ENCODE measurements at regions of chr5 and their contacts with region 1.

Region 1: DNA sequence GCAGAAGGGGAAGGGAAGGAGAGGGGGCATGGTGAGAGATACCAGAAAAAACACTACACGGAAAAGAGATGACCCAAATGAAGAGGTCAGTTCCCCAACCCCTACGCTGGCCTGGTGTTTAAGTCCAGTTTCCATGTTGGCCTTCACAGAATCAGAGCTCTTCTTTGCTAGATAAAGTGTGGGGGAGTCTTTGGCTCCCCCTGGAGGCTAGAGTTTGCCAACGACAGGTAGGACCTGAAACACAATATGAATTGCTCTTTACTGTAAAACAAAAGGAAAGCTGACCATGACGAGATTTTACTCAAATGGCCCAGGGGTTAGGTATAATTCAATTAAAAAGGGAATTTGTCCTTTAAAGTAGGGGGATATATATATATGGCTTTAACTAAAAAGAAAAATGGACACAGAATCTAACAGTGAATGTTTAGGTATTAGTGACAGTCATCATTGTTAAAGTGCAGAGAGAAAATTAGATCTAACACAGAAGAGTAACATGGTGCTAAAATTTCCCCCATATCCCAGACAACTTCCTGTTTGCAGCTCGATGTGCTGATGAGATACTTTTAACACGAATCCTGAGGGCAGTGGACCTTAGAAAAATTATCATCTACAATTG is 92.0 kb downstream of the SV2C start:
- DNase-seq: peak; percentile 68
- H3K4me3 ChIP-seq: no peak overlapping the region
- H3K27ac ChIP-seq: no peak overlapping the region
- H3K4me1 ChIP-seq: peaks cover 15% of the 10 kb centered on the region
- CTCF ChIP-seq: peak; percentile 99

Region 2: GRCh38 chr5:75717082-75717922 is 457.9 kb before region 1 on chr5 and contains the start of gene POC5:
- CTCF ChIA-PET with region 1: no interaction called
- POLR2A ChIA-PET with region 1: no interaction called
- intact Hi-C with region 1: loop called (anchors 5 kb)
- DNase-seq: peak; percentile 97
- H3K4me3 ChIP-seq: peak within 1 kb of the TSS; percentile 97
- H3K27ac ChIP-seq: peak within 1 kb of the TSS; percentile 92
- H3K4me1 ChIP-seq: peaks cover 11% of the 10 kb centered on the region
- CTCF ChIP-seq: no peak
- total RNA-seq, gene POC5: 10.7 and 20.5 TPM in 2 replicates

Region 3: GRCh38 chr5:76074487-76075065 is 100.6 kb before region 1 on chr5:
- CTCF ChIA-PET with region 1: no interaction called
- POLR2A ChIA-PET with region 1: no interaction called
- intact Hi-C with region 1: loop called (anchors 10 kb)
- DNase-seq: peak; percentile 30
- H3K4me3 ChIP-seq: no peak overlapping the region
- H3K27ac ChIP-seq: no peak overlapping the region
- H3K4me1 ChIP-seq: no peaks in the 10 kb centered on the region
- CTCF ChIP-seq: peak; percentile 74

Region 4: GRCh38 chr5:76544268-76544926 is 369.2 kb after region 1 on chr5:
- CTCF ChIA-PET with region 1: no interaction called
- POLR2A ChIA-PET with region 1: no interaction called
- intact Hi-C with region 1: loop called (anchors 10 kb)
- DNase-seq: peak; percentile 61
- H3K4me3 ChIP-seq: no peak overlapping the region
- H3K27ac ChIP-seq: no peak overlapping the region
- H3K4me1 ChIP-seq: peaks cover 43% of the 10 kb centered on the region
- CTCF ChIP-seq: peak; percentile 85